ENCODE measurements at regions of chr3 and their contacts with region 1.

Region 1: DNA sequence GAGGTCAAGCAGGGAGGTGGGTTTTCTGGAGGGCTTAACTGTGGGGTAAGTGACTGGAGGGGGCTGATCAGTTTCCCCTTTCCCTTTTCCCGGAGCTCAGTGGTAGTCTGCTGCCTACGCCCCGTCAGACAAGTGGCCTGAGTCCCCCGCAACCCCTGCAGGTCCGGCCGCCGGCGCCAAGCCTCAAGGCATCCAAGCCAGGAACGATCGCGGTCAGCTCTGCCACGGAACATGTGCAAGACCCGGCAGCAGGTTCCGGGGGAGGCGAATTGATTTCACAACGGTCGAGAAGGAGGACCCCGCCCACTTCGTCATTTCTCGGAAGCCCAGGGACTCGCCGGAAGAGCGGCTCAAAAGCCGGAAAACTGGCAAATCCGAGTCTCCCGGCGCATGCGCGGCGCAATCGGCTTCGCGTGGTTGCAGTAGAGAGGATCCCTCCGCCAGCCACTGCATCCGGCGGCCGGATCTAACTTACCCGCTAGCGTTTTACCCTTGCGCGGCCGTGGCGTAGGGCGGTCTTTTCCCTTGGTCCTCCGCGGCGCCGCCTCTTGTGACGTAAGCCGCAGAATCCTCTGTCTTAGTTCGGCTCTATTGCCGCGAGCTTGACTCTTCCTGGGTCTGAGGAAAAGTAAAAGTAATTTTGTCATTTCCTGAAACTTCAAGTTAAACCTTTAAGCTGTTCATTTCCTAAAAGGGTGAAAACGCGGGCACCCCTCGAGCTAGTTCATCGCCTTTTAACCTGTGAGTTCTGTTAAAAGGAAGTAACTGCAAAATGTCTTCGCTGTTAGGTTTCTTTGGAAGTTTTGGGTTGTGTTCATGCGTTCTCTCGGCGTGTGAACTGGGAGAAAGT is 14.9 kb upstream of the CCNL1 start:
- DNase-seq: peak; percentile 89 to 99 (median 99)
- ATAC-seq: peak; percentile 97
- H3K4me3 ChIP-seq: peak overlapping the region; percentile 81
- H3K4me3 Mint-ChIP-seq: peak overlapping the region; percentile 86 to 99 (median 93)
- H3K27ac ChIP-seq: peak overlapping the region; percentile 97
- H3K27ac Mint-ChIP-seq: peak overlapping the region; percentile 91 to 100 (median 98)
- H3K4me1 ChIP-seq: peaks cover 17 to 25% of the 10 kb centered on the region in 2 donors
- H3K4me1 Mint-ChIP-seq: peaks cover 14 to 45% (median 35%) of the 10 kb centered on the region in 7 donors
- H3K27me3 ChIP-seq: no peaks in the 10 kb centered on the region
- H3K27me3 Mint-ChIP-seq: peaks cover 0 to 8% (median 0%) of the 10 kb centered on the region in 5 donors

Region 2: GRCh38 chr3:155805802-155806618 is 1368.9 kb before region 1 on chr3 and contains the start of gene C3orf33:
- CTCF ChIA-PET with region 1: interaction called, 5 read pairs
- POLR2A ChIA-PET with region 1: interaction called, 3 read pairs
- intact Hi-C with region 1: loop called in 1 of 2 experiments (anchors 1 kb)
- DNase-seq: peak; percentile 52 to 85 (median 78)
- ATAC-seq: peak; percentile 98
- H3K4me3 ChIP-seq: peak within 1 kb of the TSS; percentile 71
- H3K4me3 Mint-ChIP-seq: peak within 1 kb of the TSS; percentile 79 to 91 (median 90)
- H3K27ac ChIP-seq: peak within 1 kb of the TSS; percentile 79
- H3K27ac Mint-ChIP-seq: peak within 1 kb of the TSS; percentile 71 to 94 (median 82)
- H3K4me1 ChIP-seq: no peaks in the 10 kb centered on the region
- H3K4me1 Mint-ChIP-seq: peaks cover 8 to 28% (median 17%) of the 10 kb centered on the region in 7 donors
- H3K27me3 ChIP-seq: no peaks in the 10 kb centered on the region
- H3K27me3 Mint-ChIP-seq: peaks cover 6 to 15% (median 10%) of the 10 kb centered on the region in 5 donors
- total RNA-seq, gene C3orf33: 1.1 to 4.6 (median 2.7) TPM

Region 3: GRCh38 chr3:156483961-156484787 is 690.7 kb before region 1 on chr3:
- CTCF ChIA-PET with region 1: no interaction called
- POLR2A ChIA-PET with region 1: interaction called, 9 read pairs
- intact Hi-C with region 1: loop called in 1 of 2 experiments (anchors 1 kb)
- DNase-seq: peak in 8 of 9 donors; percentile 35 to 68 (median 62)
- ATAC-seq: peak; percentile 88
- H3K4me3 ChIP-seq: peak overlapping the region; percentile 47
- H3K4me3 Mint-ChIP-seq: peak overlapping the region; percentile 52 to 85 (median 74)
- H3K27ac ChIP-seq: peak overlapping the region; percentile 63
- H3K27ac Mint-ChIP-seq: peak overlapping the region; percentile 76 to 95 (median 83)
- H3K4me1 ChIP-seq: peaks cover 21 to 25% of the 10 kb centered on the region in 2 donors
- H3K4me1 Mint-ChIP-seq: peaks cover 14 to 40% (median 35%) of the 10 kb centered on the region in 7 donors
- H3K27me3 ChIP-seq: no peaks in the 10 kb centered on the region
- H3K27me3 Mint-ChIP-seq: peaks cover 0 to 17% (median 0%) of the 10 kb centered on the region in 5 donors

Region 4: DNA sequence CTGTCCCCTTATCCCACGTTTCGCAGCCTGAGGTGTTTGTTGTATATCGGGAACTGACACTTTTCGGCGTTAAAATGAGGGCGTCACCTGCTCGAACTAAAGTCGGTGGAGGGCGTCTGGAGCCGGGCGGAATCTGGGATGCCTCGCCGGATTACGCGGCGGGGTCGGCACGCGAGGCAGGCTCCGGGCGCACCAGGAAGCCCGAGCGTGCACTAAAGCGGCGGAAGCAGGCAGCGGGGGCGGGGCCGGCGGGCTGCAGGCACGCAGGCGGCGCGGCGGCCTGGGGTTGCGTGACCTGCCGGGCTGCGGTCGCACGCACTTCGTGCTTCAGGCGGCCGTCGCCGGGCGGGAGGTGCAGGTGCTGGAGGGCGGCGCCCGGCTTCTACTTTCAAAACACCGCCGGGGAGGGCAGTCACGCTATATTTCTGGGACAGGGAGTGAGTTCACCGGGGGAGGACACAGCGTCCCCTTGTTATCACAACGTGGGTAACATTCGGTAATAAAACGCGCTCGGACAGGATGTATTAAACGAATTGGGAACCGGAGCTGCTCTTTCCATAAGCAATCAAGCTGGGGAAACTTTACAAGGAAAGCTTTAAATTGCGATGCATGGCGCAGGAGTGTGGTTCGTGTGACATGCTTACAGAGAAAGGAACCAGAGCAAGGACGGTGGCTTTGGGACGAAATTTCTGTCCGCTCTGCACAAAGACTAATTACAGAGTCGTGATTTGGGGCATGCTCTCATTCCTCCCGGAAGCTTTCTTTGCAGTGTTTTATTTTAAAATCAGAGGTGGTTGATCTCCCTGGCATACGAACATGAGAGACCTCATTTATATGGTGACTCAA is 357.9 kb before region 1 on chr3:
- CTCF ChIA-PET with region 1: no interaction called
- POLR2A ChIA-PET with region 1: interaction called, 10 read pairs
- intact Hi-C with region 1: loop called (anchors 1 to 2 kb)
- DNase-seq: peak; percentile 68 to 90 (median 81)
- ATAC-seq: peak; percentile 89
- H3K4me3 ChIP-seq: peak overlapping the region; percentile 64
- H3K4me3 Mint-ChIP-seq: peak overlapping the region; percentile 87 to 97 (median 95)
- H3K27ac ChIP-seq: peak overlapping the region; percentile 67
- H3K27ac Mint-ChIP-seq: peak overlapping the region; percentile 90 to 99 (median 96)
- H3K4me1 ChIP-seq: peaks cover 8 to 10% of the 10 kb centered on the region in 2 donors
- H3K4me1 Mint-ChIP-seq: peaks cover 6 to 72% (median 29%) of the 10 kb centered on the region in 7 donors
- H3K27me3 ChIP-seq: no peaks in the 10 kb centered on the region
- H3K27me3 Mint-ChIP-seq: no peaks in the 10 kb centered on the region

Region 5: DNA sequence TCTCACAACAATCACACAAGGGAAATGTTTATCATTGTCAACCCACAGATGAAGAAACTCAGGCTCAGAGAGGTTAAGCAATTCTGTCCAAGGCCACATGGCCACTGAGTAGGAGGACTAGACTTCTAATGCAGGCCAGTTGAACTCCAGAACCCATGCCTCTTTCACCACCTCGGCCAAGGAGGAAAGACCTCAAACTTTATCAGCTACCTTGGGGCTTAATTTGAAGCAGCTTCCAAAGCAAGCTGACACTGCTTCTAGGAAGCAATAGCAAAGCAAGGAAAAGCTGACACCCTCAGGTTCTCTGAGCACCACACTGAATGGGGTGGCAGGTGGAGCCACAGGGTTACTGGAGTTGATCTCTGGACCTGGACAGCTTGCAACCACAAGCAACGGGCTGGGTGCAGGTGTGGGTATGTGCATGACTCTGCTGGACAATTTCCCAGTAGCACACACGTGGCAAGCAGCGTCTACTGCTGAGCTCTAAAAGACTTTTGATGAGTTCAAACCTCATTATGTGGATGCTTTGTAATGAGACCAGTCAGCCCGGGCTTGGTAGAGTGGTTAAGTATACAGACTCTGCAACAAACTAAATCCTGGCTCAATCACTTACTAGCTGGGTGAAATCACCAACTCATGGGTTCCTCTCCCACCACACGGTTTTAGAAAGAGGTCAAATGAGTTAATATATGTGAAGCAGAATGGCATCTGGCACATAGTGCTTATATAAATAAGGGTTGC is 38.1 kb before region 1 on chr3:
- CTCF ChIA-PET with region 1: interaction called, 7 read pairs
- POLR2A ChIA-PET with region 1: interaction called, 7 read pairs
- intact Hi-C with region 1: loop called in 1 of 2 experiments (anchors 2 kb)
- DNase-seq: no peak
- ATAC-seq: no peak
- H3K4me3 ChIP-seq: no peak overlapping the region
- H3K4me3 Mint-ChIP-seq: peak overlapping the region in 2 of 10 donors; percentile 65 to 80
- H3K27ac ChIP-seq: peak overlapping the region; percentile 14
- H3K27ac Mint-ChIP-seq: peak overlapping the region in 7 of 9 donors; percentile 5 to 91 (median 78)
- H3K4me1 ChIP-seq: peaks cover 6 to 31% of the 10 kb centered on the region in 2 donors
- H3K4me1 Mint-ChIP-seq: peaks cover 3 to 65% (median 21%) of the 10 kb centered on the region in 7 donors
- H3K27me3 ChIP-seq: no peaks in the 10 kb centered on the region
- H3K27me3 Mint-ChIP-seq: no peaks in the 10 kb centered on the region

Region 6: DNA sequence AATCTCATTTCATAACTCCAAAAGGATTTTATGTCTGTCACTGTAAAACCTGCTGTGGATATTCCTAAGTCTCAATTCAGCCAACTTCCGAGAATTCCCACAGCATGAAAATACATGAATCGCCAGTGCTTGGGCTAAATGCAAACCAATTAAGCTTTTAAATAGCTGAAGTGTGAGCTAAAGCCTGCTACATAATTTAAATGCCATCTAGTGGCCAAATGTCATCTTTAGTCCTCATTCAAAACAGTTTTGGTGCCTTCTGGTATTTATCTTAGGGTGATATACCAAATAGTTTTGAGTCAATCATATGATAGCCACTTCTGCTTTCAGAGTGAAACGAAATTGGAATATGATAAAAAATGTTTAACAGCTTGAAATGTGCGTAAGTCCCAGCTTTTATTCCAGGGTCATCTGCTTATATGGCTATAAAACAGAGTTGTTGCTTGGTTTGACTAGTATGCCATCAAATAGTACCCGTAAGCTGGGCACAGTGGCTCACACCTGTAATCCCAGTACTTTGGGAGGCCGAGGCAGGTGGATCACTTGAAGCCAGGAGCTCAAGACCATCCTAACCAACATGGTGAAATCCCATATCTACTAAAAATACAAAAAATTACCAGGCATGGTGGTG is 26.9 kb after region 1 on chr3:
- CTCF ChIA-PET with region 1: interaction called, 8 read pairs
- POLR2A ChIA-PET with region 1: interaction called, 20 read pairs
- intact Hi-C with region 1: loop called (anchors 1 kb)
- DNase-seq: peak in 5 of 9 donors; percentile 10 to 37 (median 16)
- ATAC-seq: peak; percentile 51
- H3K4me3 ChIP-seq: no peak overlapping the region
- H3K4me3 Mint-ChIP-seq: no peak overlapping the region
- H3K27ac ChIP-seq: no peak overlapping the region
- H3K27ac Mint-ChIP-seq: no peak overlapping the region
- H3K4me1 ChIP-seq: no peaks in the 10 kb centered on the region
- H3K4me1 Mint-ChIP-seq: no peaks in the 10 kb centered on the region
- H3K27me3 ChIP-seq: no peaks in the 10 kb centered on the region
- H3K27me3 Mint-ChIP-seq: peaks cover 0 to 11% (median 0%) of the 10 kb centered on the region in 5 donors

Region 7: GRCh38 chr3:157220211-157220610 is 45.3 kb after region 1 on chr3:
- CTCF ChIA-PET with region 1: no interaction called
- POLR2A ChIA-PET with region 1: no interaction called
- intact Hi-C with region 1: no loop called
- DNase-seq: no peak
- ATAC-seq: no peak
- H3K4me3 ChIP-seq: no peak overlapping the region
- H3K4me3 Mint-ChIP-seq: no peak overlapping the region
- H3K27ac ChIP-seq: no peak overlapping the region
- H3K27ac Mint-ChIP-seq: no peak overlapping the region
- H3K4me1 ChIP-seq: no peaks in the 10 kb centered on the region
- H3K4me1 Mint-ChIP-seq: peaks cover 0 to 3% (median 0%) of the 10 kb centered on the region in 7 donors
- H3K27me3 ChIP-seq: no peaks in the 10 kb centered on the region
- H3K27me3 Mint-ChIP-seq: peaks cover 0 to 17% (median 0%) of the 10 kb centered on the region in 5 donors

Region 8: GRCh38 chr3:158644345-158644908 is 1469.6 kb after region 1 on chr3 and contains the start of gene GFM1:
- CTCF ChIA-PET with region 1: no interaction called
- POLR2A ChIA-PET with region 1: interaction called, 3 read pairs
- intact Hi-C with region 1: loop called (anchors 5 to 10 kb)
- DNase-seq: peak; percentile 76 to 92 (median 86)
- ATAC-seq: peak; percentile 98
- H3K4me3 ChIP-seq: peak within 1 kb of the TSS; percentile 98
- H3K4me3 Mint-ChIP-seq: peak within 1 kb of the TSS; percentile 87 to 98 (median 96)
- H3K27ac ChIP-seq: peak within 1 kb of the TSS; percentile 82
- H3K27ac Mint-ChIP-seq: peak within 1 kb of the TSS; percentile 63 to 96 (median 93)
- H3K4me1 ChIP-seq: peaks cover 8 to 21% of the 10 kb centered on the region in 2 donors
- H3K4me1 Mint-ChIP-seq: peaks cover 17 to 58% (median 41%) of the 10 kb centered on the region in 7 donors
- H3K27me3 ChIP-seq: no peaks in the 10 kb centered on the region
- H3K27me3 Mint-ChIP-seq: no peaks in the 10 kb centered on the region
- total RNA-seq, gene GFM1: 36.4 to 43.4 (median 41.8) TPM

Measured in naive thymus-derived CD4-positive, alpha-beta T cell (primary cell).